Cardiac septum (tissue), 1 donor: ENCODE measurements at regions of chr4 and their contacts with region 1.

Region 1: GRCh38 chr4:48340965-48341775 is at the start of gene SLAIN2:
- DNase-seq: peak; percentile 100
- total RNA-seq, gene SLAIN2: 159 TPM

Region 2: GRCh38 chr4:48269861-48270522 is 71.2 kb before region 1 on chr4:
- intact Hi-C with region 1: loop called (anchors 5 kb)
- DNase-seq: peak; percentile 99

Region 3: DNA sequence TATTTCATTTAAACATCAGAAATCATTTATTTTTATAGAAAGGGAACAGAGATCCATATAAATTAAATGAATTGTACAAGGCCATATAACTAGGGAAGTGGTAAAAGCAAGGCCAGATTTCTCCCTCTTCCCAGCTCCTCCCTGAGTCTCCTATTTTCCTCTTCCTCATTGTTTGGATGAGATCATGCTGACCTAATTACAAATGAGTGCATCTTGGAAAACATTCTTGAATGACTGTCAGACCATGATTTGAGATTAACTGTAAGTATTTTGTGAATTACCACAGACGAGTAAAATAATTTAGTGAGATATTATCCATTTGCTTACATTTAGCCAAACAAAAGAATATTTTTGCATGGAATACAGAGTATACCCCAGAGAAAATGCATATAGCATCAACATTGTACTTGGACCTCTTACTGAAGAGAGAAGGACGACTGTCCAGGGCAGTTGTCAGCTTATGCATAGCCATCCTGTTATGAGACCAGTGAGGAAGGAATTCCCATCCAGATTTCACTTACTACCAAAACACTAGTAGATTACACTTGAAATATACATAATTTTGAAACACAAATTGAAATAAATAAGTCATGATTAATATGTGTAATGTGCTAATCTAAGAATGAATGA is 47.5 kb after region 1 on chr4:
- intact Hi-C with region 1: loop called (anchors 5 kb)
- DNase-seq: no peak